ENCODE measurements at regions of chr2 and their contacts with region 1.

Region 1: DNA sequence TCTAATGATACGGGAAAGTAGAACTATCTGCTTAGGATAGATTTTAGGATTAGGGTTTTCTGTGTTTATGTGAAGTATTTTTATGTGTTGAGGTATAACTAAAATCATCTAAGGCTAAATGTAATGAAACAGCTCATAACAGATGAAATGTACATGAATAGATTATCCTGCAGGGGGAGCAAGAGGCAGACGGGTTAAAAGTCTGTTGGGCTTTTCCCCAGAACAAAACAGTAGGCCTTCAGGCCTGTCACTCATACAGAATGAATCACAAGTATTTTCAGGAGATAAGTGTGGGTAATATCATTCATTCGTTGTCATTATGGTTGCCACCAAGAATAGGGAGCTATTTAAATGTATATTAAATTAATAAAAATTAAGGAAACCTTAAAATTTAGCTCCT is 107.9 kb upstream of the IL1R2 start:
- DNase-seq: peak; percentile 33
- H3K4me3 ChIP-seq: no peak overlapping the region
- H3K27ac ChIP-seq: no peak overlapping the region
- H3K4me1 ChIP-seq: peaks cover 6% of the 10 kb centered on the region
- H3K27me3 ChIP-seq: no peaks in the 10 kb centered on the region
- CTCF ChIP-seq: peak; percentile 12 to 66 (median 54)
- POLR2A ChIP-seq: no peak

Region 2: DNA sequence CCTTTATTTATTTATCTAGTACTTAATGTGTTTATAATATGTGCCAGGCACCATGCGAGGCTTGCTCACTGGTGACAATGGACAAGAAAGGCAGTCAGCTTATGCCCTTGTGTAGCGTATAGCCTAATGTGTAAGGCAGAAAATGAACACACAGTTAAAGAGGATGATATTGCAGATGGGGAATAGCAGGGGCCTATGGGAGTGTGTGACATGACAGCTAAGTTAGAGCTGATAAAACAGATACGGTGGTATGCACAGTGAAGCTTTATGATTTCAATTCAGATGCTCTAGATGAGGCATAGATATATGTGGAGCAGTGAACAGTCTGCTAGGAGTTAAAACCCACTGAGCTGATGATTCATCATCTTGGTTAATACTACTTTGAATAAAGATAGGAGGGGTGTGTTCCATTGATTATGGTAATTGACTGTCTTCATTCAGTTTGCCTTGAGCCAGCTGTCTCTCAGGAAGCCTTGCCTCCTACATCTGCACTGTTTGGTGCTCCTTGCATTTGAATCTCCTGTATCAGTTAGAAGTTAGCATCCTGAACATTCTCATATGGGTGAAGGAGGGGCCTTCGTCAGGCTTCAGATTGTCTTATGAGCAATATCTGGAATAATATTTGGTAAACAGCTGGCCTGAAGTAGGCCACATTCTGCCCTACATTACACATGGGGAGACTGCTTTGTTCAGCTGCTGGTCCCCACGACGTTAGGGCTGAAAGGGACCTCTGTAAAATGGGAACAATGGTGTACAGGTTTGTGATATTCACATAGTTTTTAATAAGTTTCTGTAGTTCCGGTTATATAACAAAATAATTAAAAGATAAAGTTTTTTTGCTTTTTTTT is 173.2 kb before region 1 on chr2:
- intact Hi-C with region 1: no loop called
- DNase-seq: no peak
- H3K4me3 ChIP-seq: no peak overlapping the region
- H3K27ac ChIP-seq: no peak overlapping the region
- H3K4me1 ChIP-seq: peaks cover 3% of the 10 kb centered on the region
- H3K27me3 ChIP-seq: no peaks in the 10 kb centered on the region
- CTCF ChIP-seq: no peak
- POLR2A ChIP-seq: no peak

Region 3: DNA sequence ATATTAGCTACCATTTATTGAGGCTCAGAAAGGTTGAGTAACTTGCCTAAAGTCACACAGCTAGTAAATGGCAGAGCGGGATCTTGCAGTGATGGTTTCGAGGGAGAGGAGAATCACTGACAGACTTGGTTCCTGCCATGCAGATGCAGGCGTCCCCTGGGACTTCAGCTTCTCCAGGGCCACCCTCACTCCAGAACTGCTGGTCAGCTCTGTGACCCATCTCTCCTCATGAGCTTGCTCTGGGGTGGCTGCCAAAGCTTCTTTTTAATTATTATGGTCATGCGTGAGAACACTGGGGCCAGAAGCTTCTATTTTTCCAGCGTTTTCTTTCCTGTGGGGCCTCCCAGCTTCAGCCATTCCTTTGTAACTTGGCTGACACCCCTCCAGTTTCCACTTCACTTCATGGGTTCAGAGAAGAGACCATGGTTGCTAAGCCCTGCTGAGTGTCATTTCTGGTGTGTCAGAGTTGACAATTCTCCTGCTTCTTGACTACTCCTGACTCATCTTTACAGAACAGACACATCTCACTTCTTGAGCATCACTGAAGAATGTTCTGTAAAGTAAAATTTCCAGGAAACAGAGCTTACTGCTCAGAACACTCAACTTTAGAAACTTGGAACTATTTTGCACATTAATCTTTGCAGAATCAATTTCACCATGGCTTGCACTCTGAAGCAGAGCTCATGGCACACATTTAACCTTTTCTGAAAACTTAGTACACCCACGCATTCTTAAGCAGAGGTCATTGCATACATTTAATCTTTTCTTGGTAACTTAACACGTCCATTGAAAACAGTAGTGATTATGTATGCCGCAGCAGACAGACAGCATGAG is 178.3 kb after region 1 on chr2:
- intact Hi-C with region 1: no loop called
- DNase-seq: no peak
- H3K4me3 ChIP-seq: no peak overlapping the region
- H3K27ac ChIP-seq: no peak overlapping the region
- H3K4me1 ChIP-seq: peaks cover 11% of the 10 kb centered on the region
- H3K27me3 ChIP-seq: no peaks in the 10 kb centered on the region
- CTCF ChIP-seq: no peak
- POLR2A ChIP-seq: no peak

Region 4: GRCh38 chr2:102172745-102173144 is 288.9 kb after region 1 on chr2:
- intact Hi-C with region 1: loop called (anchors 10 kb)
- DNase-seq: no peak
- H3K4me3 ChIP-seq: no peak overlapping the region
- H3K27ac ChIP-seq: no peak overlapping the region
- H3K4me1 ChIP-seq: no peaks in the 10 kb centered on the region
- H3K27me3 ChIP-seq: no peaks in the 10 kb centered on the region
- CTCF ChIP-seq: no peak
- POLR2A ChIP-seq: no peak

Region 5: DNA sequence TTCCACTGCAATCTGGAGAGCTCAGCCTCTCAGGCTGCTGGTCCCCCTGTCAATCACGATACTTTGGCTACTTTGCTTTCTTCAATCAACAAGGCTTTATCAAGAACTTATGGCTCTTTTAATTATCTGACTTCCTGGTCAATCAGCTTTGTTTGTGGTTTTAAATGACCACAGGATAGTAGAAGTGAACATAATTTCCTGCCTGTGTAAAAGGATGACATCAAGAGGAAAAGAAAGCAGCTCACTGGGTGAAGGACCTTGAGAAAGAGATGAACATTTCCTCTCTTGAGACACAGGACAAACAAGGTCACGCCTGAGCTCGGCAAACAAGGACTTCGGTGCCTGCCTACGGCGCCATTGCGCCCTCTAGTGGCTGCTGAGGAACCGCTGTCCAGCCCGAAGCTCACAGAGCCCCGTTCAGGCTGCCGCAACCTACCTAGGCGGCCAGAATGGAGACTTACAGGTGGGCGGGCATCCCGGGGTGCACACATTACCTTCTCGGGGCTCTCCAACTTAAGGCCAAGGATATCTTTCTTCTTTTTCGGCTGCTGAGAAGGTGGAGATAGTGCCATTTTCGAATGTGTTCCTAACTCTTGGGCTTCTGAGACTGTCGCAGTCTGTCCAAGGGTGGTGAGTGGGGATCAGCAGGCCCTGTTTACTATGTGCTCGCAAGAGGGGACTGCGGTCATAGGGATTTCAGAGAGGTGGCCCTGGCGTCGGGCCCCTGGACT is 356.9 kb after region 1 on chr2:
- intact Hi-C with region 1: loop called (anchors 5 kb)
- DNase-seq: peak; percentile 93
- H3K4me3 ChIP-seq: no peak overlapping the region
- H3K27ac ChIP-seq: peak overlapping the region; percentile 52 to 64
- H3K4me1 ChIP-seq: no peaks in the 10 kb centered on the region
- H3K27me3 ChIP-seq: no peaks in the 10 kb centered on the region
- CTCF ChIP-seq: peak; percentile 93 to 99 (median 98)
- POLR2A ChIP-seq: no peak